HepG2 (cell line): ENCODE measurements at regions of chr3 and their contacts with region 1.

Region 1: GRCh38 chr3:124834723-124835718 is 52.1 kb downstream of the ITGB5 start:
- DNase-seq: peak; percentile 99
- ATAC-seq: peak; percentile 85
- H3K4me3 ChIP-seq: peak overlapping the region in 1 of 3 experiments; percentile 52; a peak in 2 of 6 replicates
- H3K27ac ChIP-seq: peak overlapping the region; percentile 100
- H3K4me1 ChIP-seq: peaks cover 98% of the 10 kb centered on the region
- H3K27me3 ChIP-seq: no peaks in the 10 kb centered on the region
- CTCF ChIP-seq: peak; percentile 45
- EP300 ChIP-seq: peak; percentile 56 to 90; a peak in 3 of 4 replicates
- POLR2A ChIP-seq: peak in 1 of 2 experiments; percentile 71; a peak in 3 of 4 replicates
- RAD21 ChIP-seq: peak; percentile 54

Region 2: GRCh38 chr3:124786441-124787241 is 48.4 kb before region 1 on chr3:
- CTCF ChIA-PET with region 1: no interaction called
- POLR2A ChIA-PET with region 1: interaction called, 8 read pairs
- in situ Hi-C with region 1: no loop called
- intact Hi-C with region 1: loop called (anchors 5 kb)
- DNase-seq: no peak
- ATAC-seq: peak; percentile 52
- H3K4me3 ChIP-seq: no peak overlapping the region
- H3K27ac ChIP-seq: no peak overlapping the region
- H3K4me1 ChIP-seq: peaks cover 23% of the 10 kb centered on the region
- H3K27me3 ChIP-seq: no peaks in the 10 kb centered on the region
- CTCF ChIP-seq: peak; percentile 34; the same call in 1 of the 2 replicates
- EP300 ChIP-seq: no peak
- POLR2A ChIP-seq: no peak
- RAD21 ChIP-seq: no peak

Region 3: DNA sequence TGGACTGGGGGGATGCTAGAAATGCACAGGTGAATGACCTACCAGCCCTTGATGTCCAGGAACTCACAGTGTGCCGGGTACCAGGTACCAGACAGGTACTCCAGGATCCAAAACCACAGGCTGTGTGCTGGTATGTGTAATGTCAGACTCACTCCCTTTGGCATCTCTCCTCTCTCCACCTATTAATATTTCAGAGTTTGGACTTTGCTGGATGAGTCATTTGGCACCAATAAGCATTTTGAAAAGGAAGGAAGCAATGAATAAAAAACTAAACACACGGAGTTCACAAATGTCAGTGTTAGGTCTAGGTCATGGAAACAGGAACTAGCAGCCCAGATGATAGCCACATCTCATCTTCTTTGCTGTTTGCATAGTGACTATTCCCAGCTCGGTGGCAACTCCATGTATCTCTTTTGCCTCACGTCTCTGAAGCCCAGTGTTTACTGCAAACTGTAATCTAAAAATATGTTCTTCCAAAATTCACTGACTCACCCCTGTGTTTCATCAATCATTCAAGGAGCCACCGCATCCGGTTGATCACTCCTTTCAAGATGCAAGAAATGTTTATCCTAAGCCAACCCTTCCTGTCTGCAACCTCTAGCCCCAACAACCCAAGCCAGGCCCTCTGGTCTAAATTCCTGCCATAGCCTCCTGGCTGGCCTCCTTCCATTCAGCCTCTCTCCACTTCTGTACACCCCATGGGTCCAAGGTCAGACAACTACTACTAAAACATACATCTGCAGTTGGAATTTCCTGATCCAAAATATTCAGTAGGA is 43.7 kb after region 1 on chr3:
- CTCF ChIA-PET with region 1: no interaction called
- POLR2A ChIA-PET with region 1: interaction called, 19 read pairs
- in situ Hi-C with region 1: loop called (anchors 5 kb)
- intact Hi-C with region 1: loop called (anchors 1 kb)
- DNase-seq: peak; percentile 93
- ATAC-seq: peak; percentile 90
- H3K4me3 ChIP-seq: peak overlapping the region in 1 of 3 experiments; percentile 15; a peak in 3 of 6 replicates
- H3K27ac ChIP-seq: peak overlapping the region; percentile 64
- H3K4me1 ChIP-seq: peaks cover 100% of the 10 kb centered on the region
- H3K27me3 ChIP-seq: no peaks in the 10 kb centered on the region
- CTCF ChIP-seq: no peak
- EP300 ChIP-seq: peak in 1 of 2 experiments; percentile 65; a peak in 2 of 4 replicates
- POLR2A ChIP-seq: 0 out of 4 replicates have a peak, but pooled peaks of 1 of the 2 experiments have one; percentile 26
- RAD21 ChIP-seq: no peak

Region 4: DNA sequence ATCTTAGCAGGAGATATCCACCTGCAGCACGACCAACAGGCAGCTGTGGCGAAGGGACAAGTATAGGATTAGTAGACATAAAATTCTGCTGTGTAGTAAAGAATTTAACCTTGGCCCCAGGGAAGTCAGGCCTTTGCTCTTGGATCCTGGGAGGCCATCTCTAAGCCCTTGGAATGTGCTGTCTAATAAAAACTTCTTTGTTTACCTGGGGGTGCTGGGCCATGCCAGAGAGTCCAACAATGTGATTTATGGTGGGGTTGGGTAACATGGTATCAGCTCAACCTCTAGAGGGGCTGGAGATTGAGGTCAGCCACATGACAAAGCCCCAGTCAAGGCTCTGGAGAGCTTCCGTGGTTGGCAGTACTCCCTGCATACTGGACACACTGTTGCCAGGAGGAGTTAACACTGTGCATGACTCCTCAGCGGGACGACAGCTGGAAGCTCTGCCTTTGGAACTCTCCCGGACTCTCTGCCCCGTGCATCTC is 168.4 kb after region 1 on chr3:
- CTCF ChIA-PET with region 1: no interaction called
- POLR2A ChIA-PET with region 1: no interaction called
- in situ Hi-C with region 1: no loop called
- intact Hi-C with region 1: loop called (anchors 2 kb)
- DNase-seq: peak; percentile 98
- ATAC-seq: peak; percentile 85
- H3K4me3 ChIP-seq: peak overlapping the region in 1 of 3 experiments; percentile 40; a peak in 1 of 6 replicates
- H3K27ac ChIP-seq: peak overlapping the region; percentile 100
- H3K4me1 ChIP-seq: peaks cover 80% of the 10 kb centered on the region
- H3K27me3 ChIP-seq: no peaks in the 10 kb centered on the region
- CTCF ChIP-seq: 0 out of 2 replicates have a peak, but pooled peaks have one; percentile 22
- EP300 ChIP-seq: peak; percentile 97 to 98
- POLR2A ChIP-seq: peak in 1 of 2 experiments; percentile 85; a peak in 2 of 4 replicates
- RAD21 ChIP-seq: peak; percentile 40; the same call in 1 of the 2 replicates